ENCODE measurements at regions of chr16 and their contacts with region 1.

Region 1: DNA sequence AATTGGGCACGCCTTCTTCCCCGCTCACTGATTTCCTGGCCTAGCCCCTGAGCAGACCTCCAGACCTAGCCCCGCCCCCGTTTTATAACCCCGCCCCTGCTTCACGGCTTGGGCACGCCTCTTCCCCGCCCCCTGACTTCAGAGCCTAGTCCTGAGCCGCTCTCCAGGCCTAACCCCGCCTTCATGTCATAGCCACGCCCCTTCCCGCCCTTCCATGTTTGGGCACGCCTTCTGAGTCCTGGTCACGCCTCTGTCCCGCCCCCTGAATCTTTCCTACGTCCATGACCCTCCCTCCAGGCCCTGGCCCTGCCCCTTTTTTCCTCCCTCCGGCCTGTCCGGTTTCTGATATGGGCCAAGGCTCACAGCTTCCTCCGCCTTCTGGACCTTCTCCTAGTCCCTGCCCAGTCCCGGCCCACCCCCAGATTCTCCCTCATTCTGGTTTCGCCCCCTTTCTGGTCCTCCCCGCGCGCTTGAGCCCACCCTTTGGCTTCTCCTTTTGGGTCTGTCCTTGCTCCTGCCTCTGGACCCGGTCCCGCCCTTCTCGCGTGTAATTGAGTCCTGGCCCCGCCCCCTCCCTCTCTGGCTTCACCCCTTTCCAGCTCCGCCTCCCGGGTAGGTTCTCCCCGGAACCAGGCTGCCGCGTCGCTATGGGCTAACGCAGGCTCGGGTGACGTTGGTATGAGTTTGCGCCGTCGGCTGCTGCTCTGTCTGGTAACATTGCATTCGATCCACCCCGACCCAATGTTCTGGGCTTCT is 15.1 kb upstream of the EEF2K start:
- DNase-seq: peak; percentile 99
- ATAC-seq: peak; percentile 69
- H3K4me3 ChIP-seq: peak overlapping the region; percentile 72 to 87 (median 72)
- H3K27ac ChIP-seq: peak overlapping the region; percentile 94
- H3K4me1 ChIP-seq: peaks cover 63% of the 10 kb centered on the region
- H3K27me3 ChIP-seq: no peaks in the 10 kb centered on the region; a peak in 2 of 5 replicates
- CTCF ChIP-seq: no peak
- EP300 ChIP-seq: no peak
- POLR2A ChIP-seq: peak in 1 of 2 experiments; percentile 78; a peak in 2 of 4 replicates
- RAD21 ChIP-seq: no peak

Region 2: DNA sequence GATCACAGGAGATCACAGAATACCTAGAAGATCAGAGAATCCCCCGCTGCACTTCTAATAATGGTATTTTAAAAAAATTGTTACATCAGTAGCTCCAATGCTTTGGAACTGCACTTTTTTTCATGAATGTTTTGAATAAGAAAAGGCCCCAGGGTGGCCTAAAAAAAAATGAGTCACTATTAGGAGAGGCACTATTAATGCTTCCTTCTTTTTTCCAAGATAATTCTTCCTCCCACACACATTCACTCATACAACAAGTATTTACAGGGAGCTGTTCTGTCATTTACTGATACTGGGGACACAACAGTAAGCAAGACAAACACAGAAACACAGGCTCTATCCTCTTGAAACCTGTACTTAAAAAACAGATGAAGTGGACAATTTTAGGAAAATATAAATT is 189.4 kb before region 1 on chr16:
- CTCF ChIA-PET with region 1: interaction called, 33 read pairs
- POLR2A ChIA-PET with region 1: interaction called, 34 read pairs
- in situ Hi-C with region 1: loop called (anchors 5 kb)
- intact Hi-C with region 1: loop called (anchors 1 kb)
- DNase-seq: no peak
- ATAC-seq: no peak
- H3K4me3 ChIP-seq: peak overlapping the region in 2 of 3 experiments; percentile 8 to 62; a peak in 2 of 6 replicates
- H3K27ac ChIP-seq: no peak overlapping the region
- H3K4me1 ChIP-seq: peaks cover 66% of the 10 kb centered on the region
- H3K27me3 ChIP-seq: peaks cover 0 to 11% of the 10 kb centered on the region in 2 experiments; a peak in 1 of 5 replicates
- CTCF ChIP-seq: no peak
- EP300 ChIP-seq: no peak
- POLR2A ChIP-seq: no peak
- RAD21 ChIP-seq: no peak

Region 3: GRCh38 chr16:22077700-22078313 is 113.1 kb before region 1 on chr16:
- CTCF ChIA-PET with region 1: interaction called, 9 read pairs
- POLR2A ChIA-PET with region 1: interaction called, 5 read pairs
- in situ Hi-C with region 1: no loop called
- intact Hi-C with region 1: loop called (anchors 1 kb)
- DNase-seq: peak; percentile 62
- ATAC-seq: peak; percentile 85
- H3K4me3 ChIP-seq: no peak overlapping the region
- H3K27ac ChIP-seq: no peak overlapping the region
- H3K4me1 ChIP-seq: no peaks in the 10 kb centered on the region
- H3K27me3 ChIP-seq: no peaks in the 10 kb centered on the region
- CTCF ChIP-seq: peak; percentile 92
- EP300 ChIP-seq: no peak
- POLR2A ChIP-seq: no peak
- RAD21 ChIP-seq: peak; percentile 91

Region 4: DNA sequence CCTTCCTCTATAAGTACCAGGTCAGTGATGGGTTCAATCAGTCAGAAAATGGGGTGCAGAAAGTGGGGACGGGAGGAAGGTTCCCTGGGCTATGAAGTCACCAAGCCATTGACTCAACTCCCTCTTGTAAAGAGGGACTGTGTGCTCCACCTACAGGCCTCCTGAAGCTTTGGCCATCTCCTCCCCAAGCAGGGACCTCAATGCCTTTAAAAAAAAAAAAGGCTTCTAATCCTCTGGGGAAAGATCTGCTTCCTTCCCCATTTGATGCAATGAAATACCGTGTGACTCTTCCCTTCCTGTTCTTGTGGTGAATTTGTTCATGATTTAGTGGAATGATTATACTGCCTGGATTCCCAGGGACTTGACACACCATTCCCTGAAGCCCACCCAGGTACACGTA is 67.8 kb before region 1 on chr16:
- CTCF ChIA-PET with region 1: no interaction called
- POLR2A ChIA-PET with region 1: no interaction called
- in situ Hi-C with region 1: loop called (anchors 5 kb)
- intact Hi-C with region 1: no loop called
- DNase-seq: no peak
- ATAC-seq: peak; percentile 75
- H3K4me3 ChIP-seq: no peak overlapping the region
- H3K27ac ChIP-seq: no peak overlapping the region
- H3K4me1 ChIP-seq: no peaks in the 10 kb centered on the region
- H3K27me3 ChIP-seq: peaks cover 7% of the 10 kb centered on the region in 2 experiments; a peak in 3 of 5 replicates
- CTCF ChIP-seq: 0 out of 2 replicates have a peak, but pooled peaks have one; percentile 39
- EP300 ChIP-seq: no peak
- POLR2A ChIP-seq: no peak
- RAD21 ChIP-seq: no peak

Region 5: DNA sequence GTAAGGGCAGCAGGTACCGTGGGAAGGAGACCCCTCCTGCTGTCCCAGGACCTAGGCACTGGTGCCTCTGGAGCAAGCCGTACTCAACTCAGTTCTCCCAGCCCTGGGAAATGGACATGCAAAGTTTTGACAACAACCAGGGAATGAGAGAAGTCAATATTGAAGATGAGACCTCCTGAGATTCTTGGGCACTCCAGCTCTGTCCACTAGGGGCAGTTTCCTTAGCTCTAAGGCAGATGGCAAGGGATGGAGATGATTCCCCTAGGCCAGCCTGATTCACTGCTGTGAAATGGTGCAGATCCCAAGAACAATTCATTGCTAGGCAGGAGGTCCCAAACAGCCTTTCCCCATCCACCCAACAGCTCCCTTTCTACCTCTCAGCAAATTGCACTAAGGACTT is 49.2 kb before region 1 on chr16:
- CTCF ChIA-PET with region 1: no interaction called
- POLR2A ChIA-PET with region 1: no interaction called
- in situ Hi-C with region 1: no loop called
- intact Hi-C with region 1: no loop called
- DNase-seq: peak; percentile 50
- ATAC-seq: peak; percentile 86
- H3K4me3 ChIP-seq: no peak overlapping the region
- H3K27ac ChIP-seq: no peak overlapping the region
- H3K4me1 ChIP-seq: no peaks in the 10 kb centered on the region
- H3K27me3 ChIP-seq: peaks cover 9 to 62% of the 10 kb centered on the region in 2 experiments; a peak in 4 of 5 replicates
- CTCF ChIP-seq: peak; percentile 52
- EP300 ChIP-seq: no peak
- POLR2A ChIP-seq: no peak
- RAD21 ChIP-seq: no peak

Region 6: DNA sequence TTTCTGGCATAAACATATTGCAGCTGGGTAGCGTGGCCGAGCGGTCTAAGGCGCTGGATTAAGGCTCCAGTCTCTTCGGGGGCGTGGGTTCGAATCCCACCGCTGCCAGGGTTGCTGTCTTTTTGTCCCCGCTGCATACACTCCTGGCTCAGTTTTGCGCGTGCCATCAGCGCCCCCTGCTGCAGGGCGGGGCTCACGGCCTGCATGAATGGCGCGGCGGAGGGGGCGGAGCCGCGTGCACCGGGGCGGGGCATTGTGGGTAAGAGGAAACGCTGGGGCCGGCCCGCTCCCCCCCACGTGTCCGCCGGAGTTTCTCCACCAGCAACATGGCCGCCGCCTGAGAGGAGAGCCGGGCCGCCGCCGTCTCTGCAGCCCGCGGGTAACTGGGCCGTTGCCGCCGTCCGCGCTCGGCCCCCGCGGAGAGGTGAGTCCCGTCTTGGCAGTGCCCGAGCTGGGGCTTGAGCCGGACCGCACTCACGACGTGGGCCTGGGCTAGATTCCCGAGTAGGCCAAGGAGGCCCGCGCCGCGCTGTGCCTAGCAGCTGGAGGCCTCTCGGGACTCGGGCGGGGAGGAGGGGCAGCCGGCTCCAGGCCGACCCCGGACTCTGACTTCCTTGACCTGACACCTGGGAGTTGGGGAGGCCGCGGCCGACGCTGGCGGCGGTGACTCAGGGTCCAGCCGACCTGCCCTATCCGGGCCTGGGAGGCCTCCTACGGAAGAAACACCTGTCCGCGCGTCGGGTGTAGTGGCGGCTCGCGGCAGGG is 106.3 kb after region 1 on chr16 and contains the start of gene POLR3E:
- CTCF ChIA-PET with region 1: interaction called, 20 read pairs
- POLR2A ChIA-PET with region 1: interaction called, 68 read pairs
- in situ Hi-C with region 1: loop called (anchors 5 kb)
- intact Hi-C with region 1: loop called (anchors 1 kb)
- DNase-seq: peak; percentile 99
- ATAC-seq: peak; percentile 85
- H3K4me3 ChIP-seq: peak within 1 kb of the TSS; percentile 83 to 96 (median 94)
- H3K27ac ChIP-seq: peak within 1 kb of the TSS; percentile 92
- H3K4me1 ChIP-seq: peaks cover 51% of the 10 kb centered on the region
- H3K27me3 ChIP-seq: no peaks in the 10 kb centered on the region; a peak in 1 of 5 replicates
- CTCF ChIP-seq: peak; percentile 99
- EP300 ChIP-seq: peak; percentile 40 to 87; a peak in 3 of 4 replicates
- POLR2A ChIP-seq: peak; percentile 71 to 92
- RAD21 ChIP-seq: peak; percentile 100
- total RNA-seq, gene POLR3E: 94.8 and 135 TPM in 2 replicates

Measured in HepG2 (cell line).